MCF 10A (cell line): ENCODE measurements at regions of chr4 and their contacts with region 1.

Region 1: GRCh38 chr4:152369902-152370295 is 166.0 kb downstream of the FBXW7 start:
- DNase-seq: no peak
- H3K4me3 Mint-ChIP-seq: no peak overlapping the region
- H3K27ac Mint-ChIP-seq: no peak overlapping the region
- H3K4me1 Mint-ChIP-seq: peaks cover 5% of the 10 kb centered on the region
- H3K27me3 Mint-ChIP-seq: no peaks in the 10 kb centered on the region
- CTCF ChIP-seq: peak; percentile 15

Region 2: GRCh38 chr4:151760712-151761527 is 609.0 kb before region 1 on chr4 and contains the start of gene GATB:
- CTCF ChIA-PET with region 1: no interaction called
- POLR2A ChIA-PET with region 1: no interaction called
- intact Hi-C with region 1: loop called (anchors 5 kb)
- DNase-seq: peak; percentile 98
- H3K4me3 Mint-ChIP-seq: peak within 1 kb of the TSS; percentile 98
- H3K27ac Mint-ChIP-seq: peak within 1 kb of the TSS; percentile 99
- H3K4me1 Mint-ChIP-seq: peaks cover 6% of the 10 kb centered on the region
- H3K27me3 Mint-ChIP-seq: no peaks in the 10 kb centered on the region
- CTCF ChIP-seq: peak; percentile 34
- total RNA-seq, gene GATB: 15.9 and 17.8 TPM in 2 replicates